MCF 10A (cell line): ENCODE measurements at regions of chr4 and their contacts with region 1.

Region 1: DNA sequence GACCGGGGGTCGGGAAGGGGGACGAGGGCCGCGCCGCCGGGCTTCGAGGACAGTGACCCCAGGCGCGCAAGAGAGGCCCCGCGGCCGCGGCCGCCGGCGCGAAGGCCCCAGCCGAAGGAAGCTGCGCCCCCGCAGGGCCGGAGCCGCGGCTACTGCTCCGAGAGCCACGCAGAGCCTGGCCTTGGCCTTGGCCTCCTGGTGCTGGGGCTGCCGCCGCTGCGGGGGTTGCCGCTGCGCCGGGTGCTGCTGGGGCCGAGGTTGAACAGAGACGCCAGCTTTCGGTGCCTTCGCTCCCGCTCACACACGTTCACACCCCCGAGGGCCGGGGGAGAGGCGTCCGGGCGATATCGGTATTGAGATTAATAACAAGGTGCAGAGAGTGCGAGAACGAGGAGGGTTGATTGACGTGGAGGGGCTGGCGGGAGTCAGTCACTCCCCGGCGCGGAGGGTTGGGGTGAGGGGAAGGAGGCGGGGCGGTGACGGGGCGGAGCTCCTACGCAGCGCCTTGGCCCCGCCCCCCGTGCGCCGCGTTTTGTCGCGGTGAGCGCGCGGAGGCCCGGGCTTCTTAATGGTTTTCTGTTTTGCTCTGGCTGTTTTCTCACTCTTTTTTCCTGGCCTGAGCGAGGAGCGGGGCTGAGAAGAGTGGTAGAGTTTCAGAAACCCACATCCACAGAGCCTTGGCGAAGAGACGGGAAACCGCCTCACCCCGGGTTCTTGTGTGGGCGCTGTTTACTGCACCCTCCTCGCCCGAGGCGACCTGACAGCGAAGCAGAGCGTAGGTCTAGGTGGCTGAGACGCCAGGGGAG is 878 bp upstream of the CNOT6L start:
- DNase-seq: peak; percentile 90
- H3K4me3 Mint-ChIP-seq: peak overlapping the region; percentile 93
- H3K27ac Mint-ChIP-seq: peak overlapping the region; percentile 96
- H3K4me1 Mint-ChIP-seq: peaks cover 34% of the 10 kb centered on the region
- H3K27me3 Mint-ChIP-seq: no peaks in the 10 kb centered on the region
- CTCF ChIP-seq: no peak

Region 2: GRCh38 chr4:77773101-77773500 is 46.9 kb before region 1 on chr4:
- CTCF ChIA-PET with region 1: interaction called, 3 read pairs
- POLR2A ChIA-PET with region 1: interaction called, 11 read pairs
- intact Hi-C with region 1: no loop called
- DNase-seq: peak; percentile 37
- H3K4me3 Mint-ChIP-seq: no peak overlapping the region
- H3K27ac Mint-ChIP-seq: no peak overlapping the region
- H3K4me1 Mint-ChIP-seq: peaks cover 22% of the 10 kb centered on the region
- H3K27me3 Mint-ChIP-seq: no peaks in the 10 kb centered on the region
- CTCF ChIP-seq: no peak

Region 3: DNA sequence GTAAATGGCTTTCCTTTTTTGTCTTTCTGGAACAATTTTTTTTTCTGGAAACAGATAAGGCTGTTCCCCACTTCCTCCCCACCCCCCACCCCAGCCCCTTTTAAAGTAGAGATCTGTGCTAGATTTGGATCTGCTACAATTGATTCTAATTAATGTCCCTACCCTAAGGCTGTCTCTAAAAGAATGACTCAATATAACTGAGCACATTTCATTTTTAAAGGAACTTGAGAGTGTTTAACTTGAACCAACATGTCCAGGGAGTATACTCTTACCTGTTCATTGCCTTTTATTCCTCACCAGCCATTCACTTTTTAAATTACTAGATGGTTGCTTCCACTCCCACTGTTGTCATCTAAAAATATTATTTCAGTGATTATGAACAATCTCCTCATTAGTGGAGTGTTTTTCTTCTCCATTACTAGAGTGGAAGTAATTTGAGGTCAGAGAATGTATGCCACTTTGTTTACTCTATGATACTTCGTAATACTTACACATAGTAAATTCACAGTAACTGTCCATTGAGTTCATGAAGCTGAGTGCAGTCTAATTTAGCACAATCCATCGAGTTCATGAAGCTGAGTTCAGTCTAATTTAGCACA is 13.2 kb after region 1 on chr4:
- CTCF ChIA-PET with region 1: interaction called, 3 read pairs
- POLR2A ChIA-PET with region 1: interaction called, 99 read pairs
- intact Hi-C with region 1: no loop called
- DNase-seq: peak; percentile 17
- H3K4me3 Mint-ChIP-seq: no peak overlapping the region
- H3K27ac Mint-ChIP-seq: peak overlapping the region; percentile 89
- H3K4me1 Mint-ChIP-seq: peaks cover 8% of the 10 kb centered on the region
- H3K27me3 Mint-ChIP-seq: no peaks in the 10 kb centered on the region
- CTCF ChIP-seq: no peak

Region 4: DNA sequence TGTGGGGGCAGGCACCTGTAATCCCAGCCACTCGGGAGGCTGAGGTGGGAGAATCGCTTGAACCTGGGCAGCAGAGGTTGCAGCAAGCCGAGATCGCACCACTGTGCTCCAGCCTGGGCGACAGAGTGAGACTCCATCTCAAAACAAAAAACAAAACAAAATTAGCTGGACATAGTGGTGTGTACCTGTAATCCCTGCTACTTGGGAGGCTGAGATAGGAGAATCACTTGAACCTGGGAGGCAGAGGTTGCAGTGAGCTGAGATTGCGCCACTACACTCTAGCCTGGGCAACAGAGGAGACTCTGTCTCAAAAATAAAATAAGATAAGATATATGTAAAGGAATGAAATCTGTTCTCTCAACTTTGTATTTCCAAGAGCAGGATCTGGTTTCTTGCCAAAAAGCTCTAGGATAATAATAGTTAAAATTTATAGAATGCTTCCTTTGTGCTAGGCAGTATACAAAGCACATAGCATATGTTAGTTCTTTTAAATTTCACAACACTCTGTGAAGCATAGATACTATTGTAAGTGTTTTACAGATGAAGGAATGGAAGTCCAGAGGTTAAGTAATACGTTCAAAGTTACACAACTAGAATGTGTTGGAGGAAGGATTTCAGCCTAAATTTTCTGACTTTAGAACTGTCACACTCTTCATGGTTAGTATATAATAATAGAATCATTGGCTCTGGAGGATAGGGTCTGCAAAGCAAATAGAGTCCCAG is 52.8 kb after region 1 on chr4:
- CTCF ChIA-PET with region 1: interaction called, 3 read pairs
- POLR2A ChIA-PET with region 1: interaction called, 71 read pairs
- intact Hi-C with region 1: no loop called
- DNase-seq: no peak
- H3K4me3 Mint-ChIP-seq: no peak overlapping the region
- H3K27ac Mint-ChIP-seq: no peak overlapping the region
- H3K4me1 Mint-ChIP-seq: peaks cover 12% of the 10 kb centered on the region
- H3K27me3 Mint-ChIP-seq: no peaks in the 10 kb centered on the region
- CTCF ChIP-seq: no peak

Region 5: GRCh38 chr4:77921701-77922100 is 101.7 kb after region 1 on chr4:
- CTCF ChIA-PET with region 1: interaction called, 4 read pairs
- POLR2A ChIA-PET with region 1: interaction called, 41 read pairs
- intact Hi-C with region 1: no loop called
- DNase-seq: peak; percentile 87
- H3K4me3 Mint-ChIP-seq: no peak overlapping the region
- H3K27ac Mint-ChIP-seq: peak overlapping the region; percentile 95
- H3K4me1 Mint-ChIP-seq: peaks cover 37% of the 10 kb centered on the region
- H3K27me3 Mint-ChIP-seq: no peaks in the 10 kb centered on the region
- CTCF ChIP-seq: no peak

Region 6: DNA sequence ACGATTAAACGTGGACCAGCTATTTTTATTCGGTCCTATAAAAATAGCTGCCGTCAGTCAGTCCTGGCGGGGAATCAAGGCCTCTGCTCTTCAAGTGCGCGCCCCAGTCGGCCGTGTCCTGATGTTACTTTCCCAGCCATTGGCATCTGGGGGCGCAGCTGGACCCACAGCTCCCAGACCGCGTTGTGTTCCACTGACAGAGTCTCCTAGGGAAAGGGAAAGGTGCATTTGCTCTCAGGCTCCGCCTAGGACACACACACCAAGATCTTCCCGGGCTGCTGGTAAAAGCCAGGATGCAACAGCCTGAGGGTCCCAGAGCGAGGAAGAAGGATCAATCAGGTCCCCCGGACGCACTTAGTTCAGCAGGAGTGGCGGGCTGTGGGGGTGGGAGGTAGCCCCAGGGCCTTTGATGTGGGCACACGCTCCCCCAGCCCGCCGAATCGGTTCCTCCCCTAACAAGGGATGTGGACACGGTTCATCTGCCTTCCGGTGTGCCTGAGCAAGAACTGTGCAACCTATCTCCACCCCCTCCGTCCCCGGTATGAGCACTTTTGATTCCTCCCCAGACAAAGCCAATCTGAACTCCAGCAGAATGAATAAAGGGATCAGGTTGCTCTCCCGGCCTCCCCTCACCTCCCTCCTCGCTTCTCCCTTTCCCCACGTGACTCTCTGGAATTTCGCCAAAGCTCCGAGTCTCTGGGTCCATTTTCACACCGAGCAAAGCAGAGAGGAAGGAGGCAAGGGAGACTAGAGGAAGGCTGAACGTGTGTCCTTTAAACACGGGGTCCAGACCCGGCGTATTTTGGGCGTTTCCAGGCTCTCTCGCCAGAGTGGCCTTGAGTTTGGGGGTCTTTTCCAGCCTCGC is 236.5 kb after region 1 on chr4:
- CTCF ChIA-PET with region 1: no interaction called
- POLR2A ChIA-PET with region 1: no interaction called
- intact Hi-C with region 1: loop called (anchors 5 kb)
- DNase-seq: peak; percentile 98
- H3K4me3 Mint-ChIP-seq: peak overlapping the region; percentile 78
- H3K27ac Mint-ChIP-seq: no peak overlapping the region
- H3K4me1 Mint-ChIP-seq: peaks cover 6% of the 10 kb centered on the region
- H3K27me3 Mint-ChIP-seq: no peaks in the 10 kb centered on the region
- CTCF ChIP-seq: no peak